ENCODE measurements at regions of chr10 and their contacts with region 1.

Region 1: DNA sequence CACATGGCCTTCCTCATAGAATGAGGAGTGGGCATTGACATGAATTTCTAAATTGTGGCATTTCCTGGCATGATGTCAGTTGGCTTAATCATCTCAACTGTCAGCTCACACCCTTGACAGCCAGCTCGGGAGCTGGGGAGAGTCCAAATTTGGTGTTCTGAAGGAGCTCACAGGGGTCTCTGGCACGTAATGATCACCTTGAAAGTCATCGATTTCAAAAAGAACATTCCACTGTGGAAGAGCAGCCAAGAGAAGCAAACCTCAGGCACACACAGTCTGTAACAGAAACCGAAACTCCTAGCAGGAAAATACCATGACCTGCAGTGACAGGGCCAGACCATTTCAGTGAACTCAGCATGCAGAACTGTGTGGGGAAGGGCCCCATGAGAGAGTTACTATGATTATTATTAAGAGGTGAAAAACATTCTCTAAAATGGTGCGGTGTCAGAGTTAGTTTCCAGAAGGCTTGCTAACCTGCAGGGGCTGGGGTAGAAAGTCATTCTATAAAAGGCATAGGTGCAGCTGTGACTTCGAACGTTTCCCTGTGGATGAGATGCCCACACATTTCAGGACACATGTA is 26.4 kb upstream of the KLF6 start:
- DNase-seq: no peak
- H3K4me3 ChIP-seq: peak overlapping the region in 1 of 2 donors; percentile 44
- H3K27ac ChIP-seq: peak overlapping the region; percentile 88 to 92
- H3K4me1 ChIP-seq: peaks cover 18 to 38% of the 10 kb centered on the region in 2 donors
- H3K27me3 ChIP-seq: no peaks in the 10 kb centered on the region
- CTCF ChIP-seq: no peak

Region 2: GRCh38 chr10:3172446-3173170 is 638.8 kb before region 1 on chr10 and contains the start of gene PITRM1:
- intact Hi-C with region 1: no loop called
- DNase-seq: peak; percentile 98 to 99
- H3K4me3 ChIP-seq: peak within 1 kb of the TSS; percentile 67 to 72
- H3K27ac ChIP-seq: peak within 1 kb of the TSS; percentile 82 to 86
- H3K4me1 ChIP-seq: peaks cover 4 to 15% of the 10 kb centered on the region in 2 donors
- H3K27me3 ChIP-seq: no peaks in the 10 kb centered on the region
- CTCF ChIP-seq: no peak
- total RNA-seq, gene PITRM1: 110 TPM

Region 3: GRCh38 chr10:3828404-3829155 is 17.2 kb after region 1 on chr10:
- intact Hi-C with region 1: loop called (anchors 2 kb)
- DNase-seq: no peak
- H3K4me3 ChIP-seq: peak overlapping the region; percentile 53 to 57
- H3K27ac ChIP-seq: peak overlapping the region; percentile 69
- H3K4me1 ChIP-seq: peaks cover 0 to 16% of the 10 kb centered on the region in 2 donors
- H3K27me3 ChIP-seq: no peaks in the 10 kb centered on the region
- CTCF ChIP-seq: no peak

Region 4: DNA sequence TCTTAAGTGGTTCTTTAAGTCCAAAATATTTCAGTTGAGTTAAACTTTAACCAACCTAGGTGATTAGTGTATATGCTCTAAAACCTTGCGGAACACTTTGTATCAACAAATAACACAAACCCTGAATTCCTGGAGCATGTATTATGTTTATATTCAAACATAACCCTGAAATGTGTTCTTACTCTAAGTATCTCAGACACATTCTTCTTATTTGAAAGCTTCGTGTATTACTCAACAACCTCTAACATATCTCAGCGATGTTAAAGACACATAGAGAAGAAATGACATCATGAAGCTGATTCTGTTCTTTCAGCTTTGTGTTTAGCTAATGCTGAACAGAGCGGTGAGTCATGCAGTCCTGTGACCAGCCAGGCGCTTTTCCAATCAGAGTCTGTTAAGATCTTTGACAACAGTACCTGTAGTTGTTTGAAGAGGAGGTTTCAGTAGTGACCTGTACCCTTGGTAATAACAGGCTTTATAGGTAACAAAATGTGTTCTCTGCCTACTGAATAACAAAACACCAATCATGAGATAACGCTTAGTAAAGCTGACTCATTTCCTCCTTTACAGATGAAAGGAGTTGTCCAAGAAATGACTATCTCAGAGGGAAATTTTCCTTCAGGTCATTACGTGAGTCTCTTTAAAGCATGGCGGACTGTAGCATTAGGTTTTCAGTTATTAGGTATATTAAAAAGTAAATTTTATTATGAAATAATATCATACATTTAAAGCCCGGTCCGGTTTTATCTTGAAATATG is 40.9 kb after region 1 on chr10:
- intact Hi-C with region 1: loop called (anchors 2 kb)
- DNase-seq: peak; percentile 68 to 93
- H3K4me3 ChIP-seq: peak overlapping the region in 1 of 2 donors; percentile 15
- H3K27ac ChIP-seq: peak overlapping the region; percentile 85 to 87
- H3K4me1 ChIP-seq: peaks cover 4 to 36% of the 10 kb centered on the region in 2 donors
- H3K27me3 ChIP-seq: no peaks in the 10 kb centered on the region
- CTCF ChIP-seq: no peak

Measured in ascending aorta (tissue), 2 donors.